Activated naive CD4-positive, alpha-beta T cell treated with anti-CD3 and anti-CD28 coated beads for 36 hours (primary cell): ENCODE measurements at regions of chr12 and their contacts with region 1.

Region 1: DNA sequence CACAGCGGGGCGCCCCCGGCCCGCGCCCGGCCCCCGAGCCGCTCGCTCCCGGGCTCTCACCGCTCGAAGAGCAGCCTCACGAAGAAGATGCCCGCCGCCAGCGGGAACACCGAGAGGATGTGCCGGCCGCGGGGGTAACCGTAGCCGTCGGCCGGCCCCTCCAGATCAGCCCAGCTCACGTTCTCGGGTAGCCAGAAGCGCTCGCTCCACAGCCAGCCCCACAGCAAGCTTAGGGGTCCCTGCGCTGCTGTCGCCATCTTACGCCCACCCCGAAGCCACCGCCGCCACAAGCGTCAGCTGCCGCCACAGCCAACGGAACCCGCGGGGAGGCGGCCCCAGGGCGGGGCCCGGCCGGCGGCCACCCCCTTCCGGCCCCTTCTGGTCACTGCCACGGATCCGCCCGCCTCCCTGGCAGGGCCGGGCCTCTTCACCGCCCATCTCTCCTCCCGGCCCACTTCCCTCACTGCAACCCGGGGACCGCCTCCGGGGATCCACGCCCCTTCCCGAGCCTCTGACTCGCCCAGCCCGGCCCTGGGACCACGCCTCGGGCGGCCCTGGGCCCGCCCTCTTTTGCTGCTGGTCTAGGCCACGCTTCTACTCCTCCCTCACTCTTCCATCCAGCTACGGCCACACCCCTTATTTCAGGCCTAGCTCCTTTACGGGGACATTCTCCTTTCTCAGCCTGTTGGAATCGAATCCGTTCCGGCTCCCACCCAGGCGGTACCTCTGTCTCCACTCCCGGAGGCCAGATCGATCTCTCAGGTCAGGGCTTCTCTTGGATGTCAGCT is at the start of gene CERS5:
- DNase-seq: peak; percentile 98
- H3K4me3 Mint-ChIP-seq: peak within 1 kb of the TSS; percentile 92
- H3K27ac Mint-ChIP-seq: peak within 1 kb of the TSS; percentile 91
- H3K4me1 Mint-ChIP-seq: peaks cover 33% of the 10 kb centered on the region
- H3K27me3 Mint-ChIP-seq: no peaks in the 10 kb centered on the region
- total RNA-seq, gene CERS5: 32.6 to 33.6 TPM

Region 2: GRCh38 chr12:49698619-49699545 is 468.4 kb before region 1 on chr12:
- CTCF ChIA-PET with region 1: no interaction called
- intact Hi-C with region 1: no loop called
- DNase-seq: peak; percentile 68
- H3K4me3 Mint-ChIP-seq: peak overlapping the region; percentile 63
- H3K27ac Mint-ChIP-seq: peak overlapping the region; percentile 87
- H3K4me1 Mint-ChIP-seq: peaks cover 54% of the 10 kb centered on the region
- H3K27me3 Mint-ChIP-seq: no peaks in the 10 kb centered on the region

Region 3: GRCh38 chr12:49828133-49829091 is 338.8 kb before region 1 on chr12 and contains the start of gene NCKAP5L:
- CTCF ChIA-PET with region 1: no interaction called
- intact Hi-C with region 1: loop called (anchors 1 kb)
- DNase-seq: peak; percentile 94
- H3K4me3 Mint-ChIP-seq: peak within 1 kb of the TSS; percentile 92
- H3K27ac Mint-ChIP-seq: peak within 1 kb of the TSS; percentile 86
- H3K4me1 Mint-ChIP-seq: peaks cover 27% of the 10 kb centered on the region
- H3K27me3 Mint-ChIP-seq: no peaks in the 10 kb centered on the region
- total RNA-seq, gene NCKAP5L: 2.8 TPM

Region 4: GRCh38 chr12:50025187-50026059 is 141.8 kb before region 1 on chr12 and contains the start of gene RACGAP1:
- CTCF ChIA-PET with region 1: no interaction called
- intact Hi-C with region 1: loop called (anchors 1 kb)
- DNase-seq: peak; percentile 98
- H3K4me3 Mint-ChIP-seq: peak within 1 kb of the TSS; percentile 92
- H3K27ac Mint-ChIP-seq: peak within 1 kb of the TSS; percentile 94
- H3K4me1 Mint-ChIP-seq: peaks cover 12% of the 10 kb centered on the region
- H3K27me3 Mint-ChIP-seq: no peaks in the 10 kb centered on the region
- total RNA-seq, gene RACGAP1: 156 to 159 TPM

Region 5: DNA sequence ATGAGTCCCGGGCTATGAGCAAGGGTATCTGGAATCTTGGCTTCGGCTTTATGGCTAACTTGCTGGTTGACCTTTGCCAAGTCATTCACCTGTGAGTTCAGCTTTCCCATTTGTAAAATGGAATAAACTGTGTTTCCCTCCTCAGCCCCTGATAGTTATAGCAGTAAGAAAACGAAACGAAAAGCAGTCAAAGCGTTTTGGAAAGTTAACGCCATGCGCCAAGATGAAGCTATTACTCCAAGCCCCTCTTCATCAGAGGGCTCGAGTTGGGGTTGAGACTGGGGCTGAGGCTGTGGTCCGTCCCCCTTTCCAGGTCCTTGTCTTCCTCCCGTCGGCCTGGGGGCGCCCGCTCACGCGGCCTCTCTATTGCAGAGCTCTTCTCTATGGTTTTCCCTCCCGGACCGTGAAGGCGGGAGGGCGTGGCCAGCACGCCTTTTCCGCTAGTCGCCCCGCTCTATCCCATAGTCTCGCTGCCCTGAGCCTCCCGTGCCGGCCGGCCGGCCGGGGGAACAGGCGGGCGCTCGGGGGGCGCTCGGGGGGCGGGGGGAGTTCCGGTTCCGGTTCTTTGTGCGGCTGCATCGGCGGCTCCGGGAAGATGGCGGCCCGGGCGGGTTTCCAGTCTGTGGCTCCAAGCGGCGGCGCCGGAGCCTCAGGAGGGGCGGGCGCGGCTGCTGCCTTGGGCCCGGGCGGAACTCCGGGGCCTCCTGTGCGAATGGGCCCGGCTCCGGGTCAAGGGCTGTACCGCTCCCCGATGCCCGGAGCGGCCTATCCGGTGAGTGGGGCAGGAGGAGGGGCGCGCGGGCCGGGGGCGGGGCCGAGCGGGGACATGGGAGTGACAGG is 82.2 kb before region 1 on chr12 and contains the start of gene SMARCD1:
- CTCF ChIA-PET with region 1: interaction called, 10 read pairs
- intact Hi-C with region 1: loop called (anchors 1 kb)
- DNase-seq: peak; percentile 88
- H3K4me3 Mint-ChIP-seq: peak within 1 kb of the TSS; percentile 89
- H3K27ac Mint-ChIP-seq: peak within 1 kb of the TSS; percentile 93
- H3K4me1 Mint-ChIP-seq: peaks cover 42% of the 10 kb centered on the region
- H3K27me3 Mint-ChIP-seq: no peaks in the 10 kb centered on the region
- total RNA-seq, gene SMARCD1: 57.7 to 60.2 TPM

Region 6: DNA sequence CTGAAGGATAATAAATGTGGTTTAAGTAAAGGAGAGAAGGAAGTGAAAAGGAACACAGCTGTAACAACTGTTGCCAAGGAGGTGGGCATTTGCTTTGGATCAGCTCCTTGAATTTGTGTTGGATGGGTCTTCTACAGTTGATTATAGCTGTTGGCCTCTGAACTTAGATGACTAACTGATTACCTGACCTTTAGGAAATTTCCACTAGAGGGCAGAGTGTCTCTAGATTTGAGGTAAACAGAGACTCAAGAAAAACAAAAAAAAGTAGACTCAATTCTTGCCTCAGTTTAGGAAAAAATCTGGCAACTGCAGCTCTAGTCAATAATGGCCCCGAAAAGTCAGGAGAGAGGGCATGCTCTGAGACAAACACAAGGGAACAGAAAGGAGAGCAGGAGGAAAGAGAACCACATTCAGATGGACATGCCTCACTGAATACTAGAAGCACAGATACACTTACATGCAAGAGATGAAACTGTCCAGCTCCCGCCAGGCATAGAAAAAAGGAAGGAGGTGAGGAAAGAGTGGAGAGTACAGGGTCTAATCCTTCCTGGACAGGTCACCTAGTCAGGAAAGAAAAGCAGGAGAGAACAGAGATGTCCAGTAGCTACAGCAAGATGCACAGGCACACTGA is 34.6 kb before region 1 on chr12:
- CTCF ChIA-PET with region 1: interaction called, 22 read pairs
- intact Hi-C with region 1: no loop called
- DNase-seq: no peak
- H3K4me3 Mint-ChIP-seq: no peak overlapping the region
- H3K27ac Mint-ChIP-seq: peak overlapping the region; percentile 81
- H3K4me1 Mint-ChIP-seq: peaks cover 8% of the 10 kb centered on the region
- H3K27me3 Mint-ChIP-seq: no peaks in the 10 kb centered on the region

Region 7: GRCh38 chr12:50400598-50401364 is 233.5 kb after region 1 on chr12 and contains the start of gene LARP4:
- CTCF ChIA-PET with region 1: no interaction called
- intact Hi-C with region 1: loop called (anchors 1 kb)
- DNase-seq: peak; percentile 94
- H3K4me3 Mint-ChIP-seq: peak within 1 kb of the TSS; percentile 99
- H3K27ac Mint-ChIP-seq: peak within 1 kb of the TSS; percentile 87
- H3K4me1 Mint-ChIP-seq: peaks cover 19% of the 10 kb centered on the region
- H3K27me3 Mint-ChIP-seq: peaks cover 2% of the 10 kb centered on the region
- total RNA-seq, gene LARP4: 44.7 to 44.9 TPM